ENCODE measurements at regions of chr19 and their contacts with region 1.

Region 1: GRCh38 chr19:33795370-33796163 is 1.1 kb upstream of the KCTD15 start:
- DNase-seq: peak; percentile 94 to 96
- ATAC-seq: peak; percentile 70 to 80
- H3K4me3 ChIP-seq: peak overlapping the region; percentile 88
- H3K27ac ChIP-seq: peak overlapping the region; percentile 96 to 97
- H3K4me1 ChIP-seq: peaks cover 28% of the 10 kb centered on the region
- CTCF ChIP-seq: peak; percentile 100
- EP300 ChIP-seq: peak; percentile 34 to 73; a peak in 1 of 5 replicates
- POLR2A ChIP-seq: peak; percentile 85
- RAD21 ChIP-seq: peak; percentile 42 to 87; a peak in 4 of 5 replicates

Region 2: DNA sequence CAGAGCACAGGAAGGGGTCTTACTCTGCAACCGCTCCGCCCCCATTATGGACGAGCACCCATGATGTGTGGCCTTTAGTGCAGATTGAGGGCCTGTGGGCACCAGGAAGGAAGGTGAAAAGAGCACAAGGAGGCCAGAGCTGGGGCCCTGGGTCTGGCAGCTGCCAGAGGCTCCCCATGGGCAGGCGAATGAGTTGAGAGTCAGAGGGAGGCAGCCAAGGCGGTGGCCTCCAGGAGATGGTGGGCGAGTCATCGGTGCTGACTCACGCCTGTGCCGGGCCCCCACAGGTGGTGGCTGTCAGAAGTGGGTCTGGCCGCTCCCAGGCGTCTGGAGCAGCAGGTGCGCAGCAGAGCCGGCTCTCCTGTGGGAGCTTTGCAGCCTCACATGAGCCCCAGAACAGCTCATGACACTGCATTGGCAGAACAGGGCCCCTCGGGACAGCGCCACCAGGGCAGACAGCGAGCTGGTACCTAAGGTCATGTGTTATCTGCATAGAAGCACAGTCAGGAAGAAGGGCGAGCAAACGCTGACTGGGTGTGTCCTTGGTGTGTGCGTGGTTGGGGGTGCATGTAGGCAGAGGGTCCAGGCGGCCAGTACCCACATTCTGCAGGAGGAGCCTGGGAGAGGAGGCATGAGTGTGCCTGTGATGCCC is 105.1 kb before region 1 on chr19:
- CTCF ChIA-PET with region 1: no interaction called
- POLR2A ChIA-PET with region 1: no interaction called
- DNase-seq: no peak
- ATAC-seq: peak; percentile 12 to 17; a peak in 3 of 6 replicates
- H3K4me3 ChIP-seq: no peak overlapping the region
- H3K27ac ChIP-seq: no peak overlapping the region
- H3K4me1 ChIP-seq: no peaks in the 10 kb centered on the region
- CTCF ChIP-seq: no peak
- EP300 ChIP-seq: no peak
- POLR2A ChIP-seq: no peak
- RAD21 ChIP-seq: no peak

Region 3: DNA sequence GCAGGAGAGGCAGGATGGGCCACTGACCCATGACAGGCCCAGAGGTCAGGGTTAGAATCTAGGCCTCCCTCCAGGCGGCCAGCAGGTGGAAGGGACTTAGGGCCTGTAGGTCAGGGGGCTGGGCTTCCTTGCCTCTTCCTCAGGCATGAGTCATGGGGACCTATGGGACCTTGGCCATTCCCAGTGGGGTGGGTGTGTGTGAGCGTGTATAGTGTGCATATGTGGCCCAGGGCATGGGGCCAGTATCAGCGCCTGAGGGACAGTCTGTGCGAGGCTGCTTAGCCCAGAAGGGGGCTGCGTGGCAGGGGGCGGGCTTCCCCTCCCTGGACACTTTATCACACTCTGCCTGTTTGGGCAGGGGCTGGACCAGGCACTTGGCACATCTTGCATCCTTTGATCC is 14.4 kb after region 1 on chr19:
- CTCF ChIA-PET with region 1: interaction called, 48 read pairs
- POLR2A ChIA-PET with region 1: interaction called, 4 read pairs
- DNase-seq: peak in 1 of 2 experiments; percentile 58
- ATAC-seq: peak in 1 of 2 experiments; percentile 32; a peak in 3 of 6 replicates
- H3K4me3 ChIP-seq: no peak overlapping the region
- H3K27ac ChIP-seq: peak overlapping the region in 1 of 2 experiments; percentile 21; a peak in 1 of 6 replicates
- H3K4me1 ChIP-seq: peaks cover 44% of the 10 kb centered on the region
- CTCF ChIP-seq: no peak
- EP300 ChIP-seq: no peak
- POLR2A ChIP-seq: no peak
- RAD21 ChIP-seq: no peak

Region 4: GRCh38 chr19:33819880-33820781 is 24.6 kb after region 1 on chr19:
- CTCF ChIA-PET with region 1: interaction called, 41 read pairs
- POLR2A ChIA-PET with region 1: interaction called, 14 read pairs
- DNase-seq: peak; percentile 76 to 93
- ATAC-seq: peak; percentile 90 to 92
- H3K4me3 ChIP-seq: peak overlapping the region; percentile 35
- H3K27ac ChIP-seq: peak overlapping the region; percentile 67 to 84
- H3K4me1 ChIP-seq: peaks cover 24% of the 10 kb centered on the region
- CTCF ChIP-seq: peak; percentile 13; the same call in 1 of the 3 replicates
- EP300 ChIP-seq: no peak
- POLR2A ChIP-seq: no peak
- RAD21 ChIP-seq: peak in 1 of 2 experiments; percentile 26; a peak in 1 of 5 replicates

Region 5: GRCh38 chr19:33828266-33829075 is 32.9 kb after region 1 on chr19:
- CTCF ChIA-PET with region 1: interaction called, 15 read pairs
- POLR2A ChIA-PET with region 1: no interaction called
- DNase-seq: no peak
- ATAC-seq: peak; percentile 31 to 41; a peak in 4 of 6 replicates
- H3K4me3 ChIP-seq: no peak overlapping the region
- H3K27ac ChIP-seq: no peak overlapping the region
- H3K4me1 ChIP-seq: no peaks in the 10 kb centered on the region
- CTCF ChIP-seq: no peak
- EP300 ChIP-seq: no peak
- POLR2A ChIP-seq: no peak
- RAD21 ChIP-seq: no peak

Region 6: GRCh38 chr19:34134190-34135053 is 338.9 kb after region 1 on chr19:
- CTCF ChIA-PET with region 1: interaction called, 13 read pairs
- POLR2A ChIA-PET with region 1: interaction called, 6 read pairs
- DNase-seq: peak; percentile 93 to 99
- ATAC-seq: peak; percentile 94 to 97
- H3K4me3 ChIP-seq: peak overlapping the region; percentile 65
- H3K27ac ChIP-seq: peak overlapping the region; percentile 87 to 93
- H3K4me1 ChIP-seq: peaks cover 10% of the 10 kb centered on the region; the same call in 2 of the 3 replicates
- CTCF ChIP-seq: no peak
- EP300 ChIP-seq: no peak
- POLR2A ChIP-seq: peak; percentile 98
- RAD21 ChIP-seq: no peak

Measured in A549 (cell line).